OCI-LY7 (cell line): ENCODE measurements at regions of chr3 and their contacts with region 1.

Region 1: DNA sequence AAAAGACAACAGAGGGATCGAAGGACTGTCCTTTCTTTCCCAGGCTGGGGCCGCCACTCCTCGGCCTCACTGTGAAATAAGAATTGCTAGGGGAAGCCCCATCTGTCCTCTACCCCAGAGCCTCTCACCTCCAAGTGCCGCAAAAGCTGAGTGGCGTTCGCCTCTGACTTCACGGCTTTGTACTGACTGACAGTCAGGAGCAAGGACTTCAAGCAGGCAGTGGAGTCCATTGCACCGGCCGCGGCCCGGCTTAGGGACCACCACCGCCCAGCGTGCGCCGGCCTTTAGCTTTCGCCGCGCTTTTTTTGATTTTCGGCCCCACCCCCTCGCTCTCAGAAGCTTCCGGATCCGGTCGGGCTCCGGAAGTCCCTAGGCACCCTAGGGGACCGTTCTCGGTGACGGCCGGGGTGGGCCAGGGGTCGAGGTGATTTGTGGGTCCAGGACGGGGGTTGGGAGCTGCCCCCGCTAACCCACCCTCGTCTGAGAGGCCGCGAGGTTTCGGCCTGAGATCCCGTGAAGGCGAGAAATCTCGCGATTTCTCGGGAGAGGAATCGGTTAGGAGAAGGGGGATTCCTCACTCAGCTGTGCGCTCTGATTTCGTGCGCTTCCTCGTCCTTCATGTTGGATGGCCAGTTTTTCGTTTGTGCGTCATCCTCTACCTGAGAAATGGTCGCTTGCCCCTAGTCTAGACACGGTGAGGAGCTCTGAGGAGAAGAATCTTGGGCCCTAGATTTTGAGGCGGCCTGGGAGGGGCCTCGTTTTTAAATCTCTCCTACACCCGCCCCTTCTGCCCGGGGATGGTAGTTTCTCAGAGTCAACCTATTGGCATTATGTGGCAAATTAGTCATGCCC is at the starts of genes CIP2A and DZIP3:
- DNase-seq: peak; percentile 97
- H3K4me3 ChIP-seq: peak within 1 kb of the TSS; percentile 93
- H3K27ac ChIP-seq: peak within 1 kb of the TSS; percentile 87
- H3K4me1 ChIP-seq: peaks cover 40% of the 10 kb centered on the region
- CTCF ChIP-seq: no peak
- total RNA-seq, gene CIP2A: 71.9 and 74.1 TPM in 2 replicates
- total RNA-seq, gene DZIP3: 14.5 and 16.6 TPM in 2 replicates

Region 2: DNA sequence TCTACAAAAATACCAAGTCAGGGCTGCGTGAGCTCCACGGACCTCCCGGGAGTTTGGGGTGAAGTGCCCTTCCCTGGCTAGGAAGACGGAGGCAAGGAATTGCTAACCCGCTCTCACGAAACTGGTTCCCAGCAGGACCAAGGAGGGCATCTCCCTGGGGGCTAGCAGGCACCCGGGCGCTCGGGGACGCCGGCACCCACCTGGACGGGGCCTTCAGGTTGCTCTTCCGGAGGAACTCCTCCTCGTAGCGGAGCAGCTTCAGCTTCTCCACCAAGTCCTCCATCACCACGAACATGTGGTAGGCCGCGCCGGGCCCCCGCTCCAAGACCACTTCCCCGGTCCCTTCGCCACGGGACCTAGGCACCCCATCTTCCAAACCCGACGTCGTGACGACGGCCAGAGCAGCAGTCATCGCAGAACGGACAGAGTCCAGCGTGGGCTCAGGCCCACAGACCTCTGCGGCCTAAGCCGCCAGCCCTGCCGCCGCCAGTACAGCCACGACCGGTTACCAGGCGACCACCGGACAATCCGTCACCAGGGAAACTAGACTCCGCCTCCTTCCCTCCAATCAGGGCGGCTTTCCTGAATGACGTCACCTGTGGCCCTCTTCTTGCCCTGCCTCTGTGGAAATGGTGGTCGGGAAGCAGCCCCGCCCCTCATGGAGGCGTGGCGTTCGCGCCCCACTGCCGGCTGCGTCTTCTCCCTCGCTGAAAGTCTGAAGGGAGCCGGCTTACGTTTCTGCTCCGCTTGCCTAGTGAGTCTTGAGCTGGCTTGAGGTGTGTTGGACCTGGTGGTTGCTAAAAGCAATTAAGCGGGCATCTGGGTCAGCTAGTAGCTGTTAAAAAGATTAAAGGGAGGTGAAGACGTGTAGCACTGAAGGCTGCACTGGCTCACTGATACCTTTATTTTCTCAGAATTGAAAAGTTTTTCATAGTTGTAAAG is 367.2 kb before region 1 on chr3 and contains the start of gene IFT57:
- CTCF ChIA-PET with region 1: no interaction called
- POLR2A ChIA-PET with region 1: interaction called, 3 read pairs
- intact Hi-C with region 1: loop called (anchors 5 kb)
- DNase-seq: peak; percentile 98
- H3K4me3 ChIP-seq: peak within 1 kb of the TSS; percentile 92
- H3K27ac ChIP-seq: peak within 1 kb of the TSS; percentile 75
- H3K4me1 ChIP-seq: peaks cover 42% of the 10 kb centered on the region
- CTCF ChIP-seq: no peak
- total RNA-seq, gene IFT57: 61.9 and 68.2 TPM in 2 replicates

Region 3: GRCh38 chr3:108552267-108553159 is 36.9 kb before region 1 on chr3:
- CTCF ChIA-PET with region 1: no interaction called
- POLR2A ChIA-PET with region 1: interaction called, 7 read pairs
- intact Hi-C with region 1: loop called (anchors 5 kb)
- DNase-seq: peak; percentile 28
- H3K4me3 ChIP-seq: no peak overlapping the region
- H3K27ac ChIP-seq: no peak overlapping the region
- H3K4me1 ChIP-seq: no peaks in the 10 kb centered on the region
- CTCF ChIP-seq: peak; percentile 81

Region 4: DNA sequence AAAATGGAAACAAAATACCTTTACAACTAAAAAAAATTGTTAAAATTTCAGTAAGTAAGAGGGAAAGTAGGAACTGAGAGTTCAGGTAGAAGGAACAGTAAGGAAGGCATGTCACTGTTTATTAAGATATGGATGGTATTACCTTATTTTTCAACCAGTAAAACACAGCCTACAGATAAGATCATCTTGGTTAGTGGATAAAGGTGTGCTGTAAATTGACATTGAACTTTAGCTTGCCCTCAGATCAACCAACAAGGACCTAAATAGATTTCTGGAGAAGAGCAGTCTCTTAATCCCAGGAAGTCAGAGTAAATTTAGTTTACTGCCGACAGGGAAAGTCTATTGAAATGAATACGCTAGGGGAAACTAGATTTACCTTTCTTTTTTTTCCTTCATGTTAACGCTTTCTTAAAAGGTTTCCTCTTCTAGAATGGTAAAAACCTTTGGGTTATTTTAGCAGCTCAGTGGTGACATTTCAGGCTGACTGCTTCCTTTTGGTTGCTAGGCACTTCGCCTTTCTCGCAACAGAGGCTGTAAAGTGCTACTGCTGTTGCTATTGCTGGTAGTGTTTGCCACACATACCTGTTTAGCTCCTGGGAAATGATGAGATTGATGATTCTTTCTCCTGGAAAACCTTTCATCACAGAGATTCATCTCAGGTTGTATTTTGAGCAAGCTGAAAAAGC is 13.0 kb after region 1 on chr3:
- CTCF ChIA-PET with region 1: interaction called, 3 read pairs
- POLR2A ChIA-PET with region 1: interaction called, 34 read pairs
- intact Hi-C with region 1: no loop called
- DNase-seq: no peak
- H3K4me3 ChIP-seq: no peak overlapping the region
- H3K27ac ChIP-seq: no peak overlapping the region
- H3K4me1 ChIP-seq: peaks cover 8% of the 10 kb centered on the region
- CTCF ChIP-seq: no peak

Region 5: GRCh38 chr3:108645364-108645763 is 56.0 kb after region 1 on chr3:
- CTCF ChIA-PET with region 1: no interaction called
- POLR2A ChIA-PET with region 1: interaction called, 12 read pairs
- intact Hi-C with region 1: no loop called
- DNase-seq: no peak
- H3K4me3 ChIP-seq: no peak overlapping the region
- H3K27ac ChIP-seq: no peak overlapping the region
- H3K4me1 ChIP-seq: no peaks in the 10 kb centered on the region
- CTCF ChIP-seq: no peak

Region 6: GRCh38 chr3:109234300-109234699 is 644.9 kb after region 1 on chr3:
- CTCF ChIA-PET with region 1: no interaction called
- POLR2A ChIA-PET with region 1: no interaction called
- intact Hi-C with region 1: no loop called
- DNase-seq: no peak
- H3K4me3 ChIP-seq: no peak overlapping the region
- H3K27ac ChIP-seq: no peak overlapping the region
- H3K4me1 ChIP-seq: no peaks in the 10 kb centered on the region
- CTCF ChIP-seq: no peak